ENCODE measurements at regions of chr9 and their contacts with region 1.

Region 1: GRCh38 chr9:129482521-129483414 is 138.1 kb downstream of the C9orf50 start:
- DNase-seq: peak; percentile 69

Region 2: DNA sequence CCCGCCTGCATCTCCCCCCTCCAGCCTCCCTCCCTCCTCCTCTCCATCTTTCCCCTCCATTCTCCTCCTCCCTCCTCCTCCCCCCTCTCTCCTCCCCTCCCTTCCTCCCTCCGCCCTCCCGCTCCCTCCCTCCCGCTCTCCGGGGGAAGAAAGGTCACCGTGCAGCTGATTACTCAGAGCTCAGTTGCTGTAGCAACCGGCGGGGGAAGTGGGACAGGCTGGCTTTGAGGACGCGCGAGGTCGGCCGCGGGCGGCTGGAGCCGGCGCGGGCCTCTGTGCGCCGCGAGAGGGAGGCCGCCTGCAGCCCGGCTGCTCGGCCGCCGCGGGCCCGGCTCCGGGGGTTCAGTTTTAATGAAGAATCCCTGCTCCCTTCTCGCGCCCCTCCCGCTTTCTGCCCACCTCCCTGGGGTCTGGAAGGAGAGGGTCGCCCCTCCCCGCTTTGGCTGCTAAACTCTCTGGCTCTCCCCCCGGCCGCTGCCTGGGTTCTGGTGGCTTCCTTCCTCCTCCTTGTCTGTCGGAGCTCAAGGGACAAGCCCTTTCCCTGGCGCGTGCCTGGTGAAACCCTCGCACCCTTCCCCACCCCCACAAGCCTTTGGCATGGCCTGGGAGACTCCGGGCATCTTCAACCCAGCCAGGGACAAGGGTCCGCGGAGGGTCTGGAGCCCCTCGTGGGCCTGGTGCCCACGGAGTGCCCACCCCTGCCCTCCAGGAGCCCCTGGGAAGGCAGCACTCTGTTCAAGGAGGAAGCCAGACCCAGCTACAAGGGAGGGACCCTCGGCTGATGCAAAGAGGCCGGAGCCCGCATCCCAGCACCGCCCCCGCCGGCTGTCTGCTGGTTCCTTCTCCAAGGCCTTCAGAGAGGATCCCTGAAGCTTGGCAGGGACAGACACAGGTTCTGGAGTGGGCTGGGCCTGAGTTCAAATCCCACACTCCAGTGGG is 22.2 kb before region 1 on chr9:
- CTCF ChIA-PET with region 1: no interaction called
- POLR2A ChIA-PET with region 1: interaction called, 40 read pairs
- DNase-seq: peak; percentile 88

Region 3: GRCh38 chr9:129584136-129584535 is 101.4 kb after region 1 on chr9:
- CTCF ChIA-PET with region 1: no interaction called
- POLR2A ChIA-PET with region 1: no interaction called
- DNase-seq: peak; percentile 82

Measured in HEK293T (cell line).